ENCODE measurements at regions of chr11 and their contacts with region 1.

Region 1: DNA sequence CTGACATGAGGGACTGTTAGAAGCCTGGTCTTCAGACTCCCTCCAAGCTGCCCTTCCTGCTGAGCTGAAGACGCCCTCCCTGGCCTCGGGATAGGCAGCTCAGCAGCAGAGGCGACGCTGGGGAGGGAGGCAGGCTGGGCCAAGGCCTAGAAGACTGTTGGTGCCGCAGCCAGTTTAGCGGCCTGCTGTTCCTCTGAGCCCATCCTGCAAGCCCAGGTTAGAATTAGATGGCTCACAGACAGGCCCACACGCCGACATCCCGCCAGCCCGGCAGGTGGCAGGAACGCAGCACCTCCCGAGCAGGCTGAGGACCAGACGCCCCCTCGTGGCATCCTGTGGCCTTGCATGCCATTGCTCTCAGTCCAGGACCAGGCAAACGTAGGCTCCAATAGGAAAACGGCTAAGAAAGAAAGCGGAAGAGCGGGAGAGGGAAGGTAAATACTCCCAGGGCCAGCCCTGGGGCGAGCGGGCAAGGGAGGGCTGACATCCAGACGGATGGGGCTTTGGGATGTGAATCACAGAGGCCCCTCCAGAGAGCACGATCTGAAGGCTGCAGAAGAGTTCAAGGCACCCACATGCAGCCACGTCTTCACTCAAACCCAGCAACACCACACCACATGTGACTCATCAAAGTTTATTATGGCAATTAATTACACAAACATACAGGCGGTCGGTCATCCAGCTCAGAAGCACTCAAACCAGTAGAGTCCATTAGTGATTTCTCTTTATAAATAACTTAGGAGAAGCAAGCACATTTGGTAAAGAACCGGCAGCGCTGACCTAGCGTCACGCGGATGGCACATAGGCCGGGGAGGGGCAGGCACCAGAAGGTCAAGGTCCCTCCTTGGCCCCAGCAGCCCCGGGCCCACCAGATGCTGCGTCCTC is 27.6 kb downstream of the CD5 start:
- DNase-seq: peak; percentile 97
- ATAC-seq: peak; percentile 89
- H3K4me3 ChIP-seq: peak overlapping the region; percentile 51
- H3K27ac ChIP-seq: peak overlapping the region; percentile 48
- H3K4me1 ChIP-seq: peaks cover 17% of the 10 kb centered on the region
- H3K27me3 ChIP-seq: no peaks in the 10 kb centered on the region
- CTCF ChIP-seq: peak; percentile 100

Region 2: DNA sequence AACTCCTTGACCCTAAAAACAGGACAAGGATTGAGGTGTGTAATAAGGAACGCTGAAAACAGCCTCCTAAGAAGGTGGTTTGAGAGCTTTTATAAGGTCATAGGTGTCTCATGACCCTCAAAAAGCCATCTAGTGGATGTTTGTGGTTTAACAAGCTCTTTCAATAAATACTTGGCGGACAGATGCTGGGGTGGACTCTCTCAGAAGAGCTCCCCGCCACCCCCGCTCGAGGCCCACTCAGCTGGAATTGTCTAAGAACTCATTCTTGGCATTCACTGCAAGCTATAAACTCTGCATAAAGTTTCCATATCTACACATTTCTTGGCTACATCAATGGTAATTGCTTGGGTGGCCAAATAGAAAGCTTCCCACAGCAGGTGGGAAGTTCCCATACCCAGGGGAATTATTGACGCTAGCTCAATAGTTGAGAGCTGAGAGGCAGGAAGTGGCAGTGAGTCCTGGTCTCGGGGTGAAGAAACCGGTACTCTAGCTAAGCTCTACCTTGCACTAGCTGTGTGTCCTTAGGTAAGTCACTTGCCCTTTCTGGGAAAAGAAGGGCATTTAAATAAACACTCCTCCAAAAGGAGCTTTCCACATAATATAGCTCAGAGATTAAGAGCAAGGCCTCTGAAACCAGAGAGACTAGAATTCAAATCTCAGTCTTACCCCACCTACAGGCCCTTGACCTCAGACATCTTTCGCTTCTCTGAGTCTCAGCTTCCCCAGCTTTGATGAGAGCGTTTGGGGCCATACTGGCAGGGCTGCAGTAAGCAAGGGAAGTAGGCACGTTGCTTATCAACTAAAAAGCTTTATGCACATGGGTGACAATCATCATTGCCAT is 366.8 kb before region 1 on chr11:
- CTCF ChIA-PET with region 1: no interaction called
- POLR2A ChIA-PET with region 1: no interaction called
- intact Hi-C with region 1: no loop called
- DNase-seq: peak; percentile 51
- ATAC-seq: no peak
- H3K4me3 ChIP-seq: no peak overlapping the region
- H3K27ac ChIP-seq: no peak overlapping the region
- H3K4me1 ChIP-seq: peaks cover 10% of the 10 kb centered on the region
- H3K27me3 ChIP-seq: peaks cover 44% of the 10 kb centered on the region
- CTCF ChIP-seq: peak; percentile 61

Region 3: DNA sequence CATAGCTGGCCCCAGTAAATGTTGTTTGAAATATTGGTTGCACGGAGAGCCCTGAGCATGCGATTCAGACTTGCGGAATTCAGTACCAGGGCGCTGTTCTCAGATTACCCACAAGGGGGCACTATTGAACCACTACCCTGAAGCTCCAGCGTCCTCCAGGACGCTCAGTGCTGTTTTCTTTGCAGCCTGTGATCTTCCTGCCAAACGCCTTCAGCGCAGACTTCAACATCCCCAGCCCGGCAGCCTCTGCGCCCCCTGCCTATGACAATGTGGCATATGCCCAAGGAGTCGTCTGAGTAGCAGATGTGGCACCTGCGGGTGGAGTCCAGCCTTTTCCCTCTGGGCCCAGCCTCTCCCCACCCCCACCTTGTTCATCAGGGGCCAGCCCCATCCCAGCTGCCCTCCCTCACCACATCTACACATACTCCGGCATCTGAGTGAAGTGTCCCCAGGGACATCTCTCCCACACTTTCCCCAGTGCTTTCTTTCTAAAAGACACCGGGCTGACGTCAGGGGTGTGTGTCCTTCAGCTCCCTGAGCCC is 354.4 kb before region 1 on chr11:
- CTCF ChIA-PET with region 1: interaction called, 12 read pairs
- POLR2A ChIA-PET with region 1: no interaction called
- intact Hi-C with region 1: loop called (anchors 5 kb)
- DNase-seq: peak; percentile 97
- ATAC-seq: peak; percentile 87
- H3K4me3 ChIP-seq: no peak overlapping the region
- H3K27ac ChIP-seq: no peak overlapping the region
- H3K4me1 ChIP-seq: peaks cover 11% of the 10 kb centered on the region
- H3K27me3 ChIP-seq: no peaks in the 10 kb centered on the region
- CTCF ChIP-seq: peak; percentile 93

Region 4: DNA sequence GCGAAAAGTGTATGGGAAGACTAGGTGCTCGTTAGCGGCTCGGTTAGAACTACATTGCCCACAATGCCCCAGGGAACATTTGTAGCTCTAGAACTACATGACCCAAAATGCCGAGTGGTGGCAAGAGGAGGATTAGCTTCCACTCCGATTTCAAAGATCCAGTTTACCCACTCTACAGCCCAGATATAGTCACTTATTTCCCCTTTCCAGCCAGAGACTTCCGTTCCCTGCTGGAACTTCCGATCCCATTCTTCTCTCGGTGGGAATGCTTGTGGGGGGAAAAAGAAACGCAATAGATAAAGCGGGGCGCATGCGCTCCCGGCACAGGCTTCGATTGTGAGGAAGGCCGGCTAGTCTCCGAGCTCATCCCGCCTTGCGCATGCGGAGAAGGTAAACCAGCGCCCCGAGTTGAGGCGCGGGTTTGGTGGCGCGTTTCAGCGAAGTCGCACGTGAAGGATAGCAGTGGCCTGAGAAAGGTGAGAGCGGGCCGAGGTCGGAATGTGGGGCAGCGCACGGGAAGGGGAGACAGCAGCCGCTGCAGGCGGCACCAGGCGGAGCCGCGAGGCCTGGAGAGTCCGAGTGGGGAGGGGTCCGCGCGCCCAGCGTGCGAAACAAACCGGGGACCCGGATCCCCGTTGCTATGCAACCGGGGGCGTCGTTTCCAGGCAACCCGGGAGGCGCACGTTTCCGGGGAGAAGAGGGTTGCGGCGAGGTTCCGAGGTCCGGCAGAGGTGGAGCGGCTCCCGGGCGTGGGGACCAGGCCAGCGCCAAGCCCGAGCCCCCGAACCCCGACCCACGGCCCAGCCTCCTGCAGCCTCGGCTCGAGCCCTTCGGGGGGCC is 215.9 kb before region 1 on chr11 and contains the start of gene TMEM109:
- CTCF ChIA-PET with region 1: interaction called, 7 read pairs
- POLR2A ChIA-PET with region 1: no interaction called
- intact Hi-C with region 1: loop called (anchors 2 kb)
- DNase-seq: peak; percentile 89
- ATAC-seq: peak; percentile 71
- H3K4me3 ChIP-seq: peak within 1 kb of the TSS; percentile 73
- H3K27ac ChIP-seq: peak within 1 kb of the TSS; percentile 73
- H3K4me1 ChIP-seq: peaks cover 33% of the 10 kb centered on the region
- H3K27me3 ChIP-seq: no peaks in the 10 kb centered on the region
- CTCF ChIP-seq: no peak
- total RNA-seq, gene TMEM109: 165 and 202 TPM in 2 replicates

Region 5: GRCh38 chr11:60991457-60991856 is 138.4 kb before region 1 on chr11:
- CTCF ChIA-PET with region 1: interaction called, 12 read pairs
- POLR2A ChIA-PET with region 1: no interaction called
- intact Hi-C with region 1: no loop called
- DNase-seq: no peak
- ATAC-seq: no peak
- H3K4me3 ChIP-seq: no peak overlapping the region
- H3K27ac ChIP-seq: no peak overlapping the region
- H3K4me1 ChIP-seq: peaks cover 12% of the 10 kb centered on the region
- H3K27me3 ChIP-seq: peaks cover 33% of the 10 kb centered on the region
- CTCF ChIP-seq: no peak

Region 6: DNA sequence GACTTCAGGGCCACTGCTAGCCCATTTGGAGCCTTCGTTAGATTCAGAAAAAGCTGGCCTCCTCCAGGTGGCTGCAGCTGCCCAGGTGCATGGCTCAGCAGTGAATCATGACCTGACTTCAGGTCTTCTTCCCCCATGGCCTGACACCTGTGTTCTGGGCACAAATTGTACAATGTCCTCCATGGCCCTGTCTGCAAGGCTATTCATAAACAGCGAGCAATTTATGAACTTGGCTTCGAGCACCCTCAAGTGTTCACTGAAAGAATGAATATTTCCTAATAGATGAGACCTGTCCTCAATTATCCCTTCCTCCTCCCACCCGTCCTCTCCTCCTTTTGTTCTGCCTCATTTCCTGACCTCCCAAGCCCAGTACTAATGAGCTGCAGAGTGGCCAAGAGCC is 43.6 kb after region 1 on chr11:
- CTCF ChIA-PET with region 1: no interaction called
- POLR2A ChIA-PET with region 1: no interaction called
- intact Hi-C with region 1: loop called (anchors 1 kb)
- DNase-seq: peak; percentile 84
- ATAC-seq: peak; percentile 93
- H3K4me3 ChIP-seq: no peak overlapping the region
- H3K27ac ChIP-seq: no peak overlapping the region
- H3K4me1 ChIP-seq: peaks cover 6% of the 10 kb centered on the region; the same call in 1 of the 2 replicates
- H3K27me3 ChIP-seq: peaks cover 30% of the 10 kb centered on the region
- CTCF ChIP-seq: peak; percentile 72

Region 7: GRCh38 chr11:61201476-61201875 is 71.6 kb after region 1 on chr11:
- CTCF ChIA-PET with region 1: no interaction called
- POLR2A ChIA-PET with region 1: no interaction called
- intact Hi-C with region 1: no loop called
- DNase-seq: no peak
- ATAC-seq: no peak
- H3K4me3 ChIP-seq: no peak overlapping the region
- H3K27ac ChIP-seq: no peak overlapping the region
- H3K4me1 ChIP-seq: no peaks in the 10 kb centered on the region
- H3K27me3 ChIP-seq: peaks cover 45% of the 10 kb centered on the region
- CTCF ChIP-seq: no peak